CD8-positive, alpha-beta T cell (primary cell): ENCODE measurements at regions of chr2 and their contacts with region 1.

Region 1: DNA sequence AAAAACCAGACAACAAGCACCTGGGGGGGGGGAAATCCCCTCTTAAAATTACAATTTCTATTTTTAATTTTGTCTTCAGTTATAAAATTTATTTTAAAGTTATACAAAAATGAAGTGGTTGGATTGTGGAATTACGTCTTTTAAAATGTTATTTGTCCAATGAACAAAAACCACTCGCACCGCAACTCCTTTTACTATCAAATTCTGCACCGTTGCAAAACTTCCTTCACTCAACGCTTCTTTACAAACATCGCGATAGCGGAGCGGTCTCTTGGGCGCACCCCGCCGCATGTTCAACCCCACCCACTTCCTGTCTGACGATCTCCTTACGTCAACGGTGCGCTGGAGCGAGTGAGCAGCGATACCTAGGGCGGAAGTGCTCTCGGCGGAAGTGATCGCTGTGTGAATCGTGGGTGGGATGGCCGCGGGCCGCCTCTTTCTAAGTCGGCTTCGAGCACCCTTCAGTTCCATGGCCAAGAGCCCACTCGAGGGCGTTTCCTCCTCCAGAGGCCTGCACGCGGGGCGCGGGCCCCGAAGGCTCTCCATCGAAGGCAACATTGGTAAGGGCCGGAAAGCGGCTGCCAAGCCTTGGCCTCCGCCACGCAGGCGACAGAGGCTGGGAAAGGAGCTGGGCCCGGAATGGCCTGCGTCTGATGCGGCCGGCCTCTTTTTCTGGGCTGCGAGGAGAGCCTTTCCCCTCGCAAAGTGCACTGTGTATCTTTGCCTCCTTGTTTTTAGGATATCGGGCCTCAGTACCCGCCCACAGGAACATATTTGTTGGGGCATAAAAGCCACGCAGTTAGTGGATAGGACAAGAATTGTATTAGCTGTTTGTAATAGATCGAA is at the start of gene DGUOK:
- DNase-seq: peak; percentile 90 to 100 (median 96)
- ATAC-seq: peak; percentile 96
- H3K4me3 ChIP-seq: peak within 1 kb of the TSS; percentile 70 to 72
- H3K4me3 Mint-ChIP-seq: peak within 1 kb of the TSS; percentile 88
- H3K27ac ChIP-seq: peak within 1 kb of the TSS; percentile 94
- H3K27ac Mint-ChIP-seq: peak within 1 kb of the TSS; percentile 99
- H3K4me1 ChIP-seq: peaks cover 45% of the 10 kb centered on the region
- H3K4me1 Mint-ChIP-seq: peaks cover 52% of the 10 kb centered on the region
- H3K27me3 ChIP-seq: no peaks in the 10 kb centered on the region
- H3K27me3 Mint-ChIP-seq: no peaks in the 10 kb centered on the region
- CTCF ChIP-seq: no peak
- total RNA-seq, gene DGUOK: 29.0 to 31.8 TPM

Region 2: GRCh38 chr2:73902284-73902683 is 24.4 kb before region 1 on chr2:
- CTCF ChIA-PET with region 1: no interaction called
- POLR2A ChIA-PET with region 1: no interaction called
- intact Hi-C with region 1: no loop called
- DNase-seq: no peak
- ATAC-seq: no peak
- H3K4me3 ChIP-seq: no peak overlapping the region
- H3K4me3 Mint-ChIP-seq: no peak overlapping the region
- H3K27ac ChIP-seq: no peak overlapping the region
- H3K27ac Mint-ChIP-seq: no peak overlapping the region
- H3K4me1 ChIP-seq: peaks cover 5% of the 10 kb centered on the region
- H3K4me1 Mint-ChIP-seq: peaks cover 5% of the 10 kb centered on the region
- H3K27me3 ChIP-seq: no peaks in the 10 kb centered on the region
- H3K27me3 Mint-ChIP-seq: peaks cover 2% of the 10 kb centered on the region
- CTCF ChIP-seq: no peak

Region 3: DNA sequence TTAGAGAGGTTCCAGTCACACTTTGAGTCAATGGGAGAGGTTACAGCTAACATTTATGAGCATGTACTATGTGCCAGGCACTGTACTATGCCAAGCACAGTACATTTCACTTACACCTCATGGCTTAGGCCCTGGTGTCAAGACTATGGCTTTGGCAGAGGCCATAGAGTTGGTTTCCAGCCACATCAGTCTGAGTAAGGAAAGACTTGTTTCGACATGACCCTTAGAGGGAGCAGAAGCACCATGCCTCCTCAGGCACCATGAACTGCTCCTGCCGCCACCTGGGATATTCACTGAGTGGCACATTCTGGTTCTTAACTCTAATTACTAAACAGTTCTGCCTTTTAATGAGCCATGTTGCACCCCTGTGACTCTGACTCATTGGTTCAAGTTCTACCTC is 12.7 kb after region 1 on chr2:
- CTCF ChIA-PET with region 1: interaction called, 4 read pairs
- POLR2A ChIA-PET with region 1: interaction called, 13 read pairs
- intact Hi-C with region 1: no loop called
- DNase-seq: peak in 4 of 9 experiments; percentile 34 to 64 (median 44)
- ATAC-seq: peak; percentile 80
- H3K4me3 ChIP-seq: no peak overlapping the region
- H3K4me3 Mint-ChIP-seq: no peak overlapping the region
- H3K27ac ChIP-seq: no peak overlapping the region
- H3K27ac Mint-ChIP-seq: peak overlapping the region; percentile 56
- H3K4me1 ChIP-seq: peaks cover 33% of the 10 kb centered on the region
- H3K4me1 Mint-ChIP-seq: peaks cover 73% of the 10 kb centered on the region
- H3K27me3 ChIP-seq: no peaks in the 10 kb centered on the region
- H3K27me3 Mint-ChIP-seq: no peaks in the 10 kb centered on the region
- CTCF ChIP-seq: peak; percentile 20

Region 4: GRCh38 chr2:74002487-74003391 is 76.0 kb after region 1 on chr2:
- CTCF ChIA-PET with region 1: no interaction called
- POLR2A ChIA-PET with region 1: interaction called, 5 read pairs
- intact Hi-C with region 1: loop called (anchors 1 kb)
- DNase-seq: peak; percentile 54 to 91 (median 79)
- ATAC-seq: peak; percentile 94
- H3K4me3 ChIP-seq: peak overlapping the region; percentile 50 to 52
- H3K4me3 Mint-ChIP-seq: peak overlapping the region; percentile 88
- H3K27ac ChIP-seq: peak overlapping the region in 1 of 2 experiments; percentile 66
- H3K27ac Mint-ChIP-seq: peak overlapping the region; percentile 69
- H3K4me1 ChIP-seq: peaks cover 36% of the 10 kb centered on the region
- H3K4me1 Mint-ChIP-seq: peaks cover 76% of the 10 kb centered on the region
- H3K27me3 ChIP-seq: no peaks in the 10 kb centered on the region
- H3K27me3 Mint-ChIP-seq: no peaks in the 10 kb centered on the region
- CTCF ChIP-seq: no peak

Region 5: GRCh38 chr2:74119912-74120825 is 193.5 kb after region 1 on chr2:
- CTCF ChIA-PET with region 1: no interaction called
- POLR2A ChIA-PET with region 1: interaction called, 3 read pairs
- intact Hi-C with region 1: loop called (anchors 1 kb)
- DNase-seq: peak; percentile 76 to 92 (median 83)
- ATAC-seq: peak; percentile 97
- H3K4me3 ChIP-seq: peak overlapping the region; percentile 94 to 96
- H3K4me3 Mint-ChIP-seq: peak overlapping the region; percentile 84
- H3K27ac ChIP-seq: peak overlapping the region; percentile 82 to 95
- H3K27ac Mint-ChIP-seq: peak overlapping the region; percentile 92
- H3K4me1 ChIP-seq: peaks cover 8% of the 10 kb centered on the region
- H3K4me1 Mint-ChIP-seq: peaks cover 7% of the 10 kb centered on the region
- H3K27me3 ChIP-seq: peaks cover 0 to 4% of the 10 kb centered on the region in 2 experiments
- H3K27me3 Mint-ChIP-seq: peaks cover 4% of the 10 kb centered on the region
- CTCF ChIP-seq: peak; percentile 47

Region 6: GRCh38 chr2:74198461-74199274 is 272.0 kb after region 1 on chr2 and contains the start of gene MTHFD2:
- CTCF ChIA-PET with region 1: no interaction called
- POLR2A ChIA-PET with region 1: no interaction called
- intact Hi-C with region 1: loop called in 1 of 2 experiments (anchors 5 kb)
- DNase-seq: peak; percentile 74 to 93 (median 88)
- ATAC-seq: peak; percentile 82
- H3K4me3 ChIP-seq: peak within 1 kb of the TSS; percentile 78 to 86
- H3K4me3 Mint-ChIP-seq: peak within 1 kb of the TSS; percentile 98
- H3K27ac ChIP-seq: peak within 1 kb of the TSS; percentile 87 to 89
- H3K27ac Mint-ChIP-seq: peak within 1 kb of the TSS; percentile 99
- H3K4me1 ChIP-seq: peaks cover 17% of the 10 kb centered on the region
- H3K4me1 Mint-ChIP-seq: peaks cover 25% of the 10 kb centered on the region
- H3K27me3 ChIP-seq: no peaks in the 10 kb centered on the region
- H3K27me3 Mint-ChIP-seq: no peaks in the 10 kb centered on the region
- CTCF ChIP-seq: peak; percentile 77
- total RNA-seq, gene MTHFD2: 25.8 to 26.7 TPM

Region 7: GRCh38 chr2:74391580-74392448 is 465.1 kb after region 1 on chr2:
- CTCF ChIA-PET with region 1: no interaction called
- POLR2A ChIA-PET with region 1: no interaction called
- intact Hi-C with region 1: loop called (anchors 5 kb)
- DNase-seq: peak; percentile 91 to 98 (median 95)
- ATAC-seq: peak; percentile 90
- H3K4me3 ChIP-seq: peak overlapping the region; percentile 67 to 87
- H3K4me3 Mint-ChIP-seq: peak overlapping the region; percentile 99
- H3K27ac ChIP-seq: peak overlapping the region; percentile 87 to 96
- H3K27ac Mint-ChIP-seq: peak overlapping the region; percentile 100
- H3K4me1 ChIP-seq: peaks cover 20% of the 10 kb centered on the region
- H3K4me1 Mint-ChIP-seq: peaks cover 9% of the 10 kb centered on the region
- H3K27me3 ChIP-seq: no peaks in the 10 kb centered on the region
- H3K27me3 Mint-ChIP-seq: no peaks in the 10 kb centered on the region
- CTCF ChIP-seq: peak; percentile 96

Region 8: GRCh38 chr2:74458132-74458925 is 531.6 kb after region 1 on chr2 and contains the start of gene WBP1:
- CTCF ChIA-PET with region 1: no interaction called
- POLR2A ChIA-PET with region 1: no interaction called
- intact Hi-C with region 1: loop called in 1 of 2 experiments (anchors 5 kb)
- DNase-seq: peak; percentile 96 to 100 (median 98)
- ATAC-seq: peak; percentile 77
- H3K4me3 ChIP-seq: peak within 1 kb of the TSS; percentile 84 to 95
- H3K4me3 Mint-ChIP-seq: peak within 1 kb of the TSS; percentile 97
- H3K27ac ChIP-seq: peak within 1 kb of the TSS; percentile 93 to 100
- H3K27ac Mint-ChIP-seq: peak within 1 kb of the TSS; percentile 99
- H3K4me1 ChIP-seq: peaks cover 34% of the 10 kb centered on the region
- H3K4me1 Mint-ChIP-seq: peaks cover 57% of the 10 kb centered on the region
- H3K27me3 ChIP-seq: no peaks in the 10 kb centered on the region
- H3K27me3 Mint-ChIP-seq: no peaks in the 10 kb centered on the region
- CTCF ChIP-seq: no peak
- total RNA-seq, gene WBP1: 68.5 to 70.6 TPM